Heart right ventricle (tissue), 16 donors: ENCODE measurements at regions of chr3 and their contacts with region 1.

Region 1: GRCh38 chr3:11576453-11576852 is 67.3 kb downstream of the VGLL4 start:
- DNase-seq: no peak
- ATAC-seq: peak in 7 of 8 donors; percentile 23 to 62 (median 50)
- H3K4me3 ChIP-seq: no peak overlapping the region
- H3K27ac ChIP-seq: peak overlapping the region in 6 of 10 donors; percentile 18 to 51 (median 34)
- H3K4me1 ChIP-seq: peaks cover 4 to 72% (median 30%) of the 10 kb centered on the region in 9 donors
- H3K27me3 ChIP-seq: no peaks in the 10 kb centered on the region
- CTCF ChIP-seq: no peak

Region 2: DNA sequence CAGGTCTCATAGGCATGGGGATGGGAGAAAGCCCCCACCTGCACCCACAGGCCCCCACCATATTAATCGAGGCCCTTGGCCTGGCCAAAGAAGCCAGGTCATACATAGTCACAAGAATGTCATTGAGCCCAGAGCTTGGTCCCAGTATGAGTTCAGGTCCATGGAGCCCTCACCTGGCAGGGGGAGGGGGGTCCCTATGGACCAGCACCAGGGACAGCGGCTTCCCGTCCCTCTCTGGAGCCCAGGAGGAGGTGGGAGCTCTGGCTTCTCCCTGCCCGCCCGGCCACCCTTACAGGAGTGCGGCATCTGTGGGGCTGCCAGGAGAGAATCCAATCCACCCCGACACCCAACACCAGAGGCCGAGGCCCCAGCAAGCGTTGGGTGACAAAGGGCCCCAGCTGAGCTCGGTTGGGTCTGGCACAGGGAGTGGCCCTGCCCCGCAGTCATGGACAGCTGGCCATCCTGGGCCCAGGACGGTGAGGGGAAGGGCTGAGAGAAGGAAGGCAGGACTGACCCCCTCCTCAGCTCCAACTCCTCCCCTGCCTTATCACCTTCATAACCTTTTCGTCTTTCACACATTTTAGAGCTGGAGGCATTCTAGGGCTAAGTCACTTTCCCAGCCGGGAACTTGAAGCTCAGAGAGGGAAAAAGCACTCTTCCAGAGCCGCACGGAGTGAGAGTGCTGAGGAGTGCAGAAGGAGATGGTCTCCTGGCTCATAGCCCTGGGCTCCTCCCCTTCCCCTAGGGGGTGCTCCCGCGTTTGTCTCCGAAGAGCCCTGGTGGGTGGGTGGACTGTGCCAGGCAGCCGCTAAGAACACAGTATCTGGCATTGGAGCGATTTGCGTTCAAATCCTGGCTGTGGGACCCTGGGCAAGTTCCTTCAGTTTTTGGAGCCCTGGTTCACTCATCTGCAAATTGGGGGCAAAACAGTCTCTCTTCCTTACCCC is 1125.7 kb before region 1 on chr3:
- intact Hi-C with region 1: loop called in 1 of 10 experiments (anchors 5 kb)
- DNase-seq: no peak
- ATAC-seq: no peak
- H3K4me3 ChIP-seq: no peak overlapping the region
- H3K27ac ChIP-seq: no peak overlapping the region
- H3K4me1 ChIP-seq: no peaks in the 10 kb centered on the region
- H3K27me3 ChIP-seq: peaks cover 0 to 72% (median 25%) of the 10 kb centered on the region in 7 donors
- CTCF ChIP-seq: no peak

Region 3: DNA sequence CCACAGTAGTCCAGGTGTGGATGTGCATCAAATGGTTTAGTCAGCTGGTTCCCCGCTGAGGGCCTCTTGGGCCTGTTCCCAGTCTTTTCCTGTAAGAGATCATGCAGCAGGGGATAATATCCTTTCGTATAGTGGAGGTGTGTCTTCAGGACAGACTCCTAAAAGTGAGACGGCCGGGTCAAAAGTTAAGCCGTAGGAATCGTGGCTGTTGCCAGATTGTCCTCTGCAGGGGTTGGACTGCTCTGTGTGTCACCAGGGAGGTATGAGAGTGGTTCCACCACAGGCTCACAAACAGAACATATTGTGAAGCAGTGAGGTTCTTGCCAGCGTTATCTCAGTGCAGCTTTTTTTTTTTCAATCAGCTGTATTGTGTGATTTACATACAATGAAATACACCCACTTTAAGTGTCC is 27.7 kb before region 1 on chr3:
- intact Hi-C with region 1: loop called in 1 of 10 experiments (anchors 2 kb)
- DNase-seq: no peak
- ATAC-seq: peak in 6 of 8 donors; percentile 6 to 60 (median 38)
- H3K4me3 ChIP-seq: no peak overlapping the region
- H3K27ac ChIP-seq: peak overlapping the region in 7 of 10 donors; percentile 7 to 56 (median 36)
- H3K4me1 ChIP-seq: peaks cover 6 to 70% (median 34%) of the 10 kb centered on the region in 9 donors
- H3K27me3 ChIP-seq: no peaks in the 10 kb centered on the region
- CTCF ChIP-seq: no peak

Region 4: GRCh38 chr3:12135029-12135657 is 558.7 kb after region 1 on chr3:
- intact Hi-C with region 1: no loop called
- DNase-seq: peak; percentile 55 to 76
- ATAC-seq: peak; percentile 75 to 89 (median 81)
- H3K4me3 ChIP-seq: no peak overlapping the region
- H3K27ac ChIP-seq: peak overlapping the region in 2 of 10 donors; percentile 18 to 19
- H3K4me1 ChIP-seq: peaks cover 3 to 31% (median 20%) of the 10 kb centered on the region in 9 donors
- H3K27me3 ChIP-seq: peaks cover 0 to 12% (median 0%) of the 10 kb centered on the region in 7 donors
- CTCF ChIP-seq: peak; percentile 80 to 96 (median 92)

Region 5: GRCh38 chr3:13263770-13264467 is 1687.5 kb after region 1 on chr3:
- intact Hi-C with region 1: no loop called
- DNase-seq: peak in 1 of 2 donors; percentile 35
- ATAC-seq: peak in 7 of 8 donors; percentile 44 to 84 (median 60)
- H3K4me3 ChIP-seq: no peak overlapping the region
- H3K27ac ChIP-seq: peak overlapping the region in 9 of 10 donors; percentile 16 to 76 (median 44)
- H3K4me1 ChIP-seq: peaks cover 0 to 41% (median 3%) of the 10 kb centered on the region in 9 donors
- H3K27me3 ChIP-seq: peaks cover 0 to 8% (median 0%) of the 10 kb centered on the region in 7 donors
- CTCF ChIP-seq: no peak